ENCODE measurements at regions of chr4 and their contacts with region 1.

Region 1: DNA sequence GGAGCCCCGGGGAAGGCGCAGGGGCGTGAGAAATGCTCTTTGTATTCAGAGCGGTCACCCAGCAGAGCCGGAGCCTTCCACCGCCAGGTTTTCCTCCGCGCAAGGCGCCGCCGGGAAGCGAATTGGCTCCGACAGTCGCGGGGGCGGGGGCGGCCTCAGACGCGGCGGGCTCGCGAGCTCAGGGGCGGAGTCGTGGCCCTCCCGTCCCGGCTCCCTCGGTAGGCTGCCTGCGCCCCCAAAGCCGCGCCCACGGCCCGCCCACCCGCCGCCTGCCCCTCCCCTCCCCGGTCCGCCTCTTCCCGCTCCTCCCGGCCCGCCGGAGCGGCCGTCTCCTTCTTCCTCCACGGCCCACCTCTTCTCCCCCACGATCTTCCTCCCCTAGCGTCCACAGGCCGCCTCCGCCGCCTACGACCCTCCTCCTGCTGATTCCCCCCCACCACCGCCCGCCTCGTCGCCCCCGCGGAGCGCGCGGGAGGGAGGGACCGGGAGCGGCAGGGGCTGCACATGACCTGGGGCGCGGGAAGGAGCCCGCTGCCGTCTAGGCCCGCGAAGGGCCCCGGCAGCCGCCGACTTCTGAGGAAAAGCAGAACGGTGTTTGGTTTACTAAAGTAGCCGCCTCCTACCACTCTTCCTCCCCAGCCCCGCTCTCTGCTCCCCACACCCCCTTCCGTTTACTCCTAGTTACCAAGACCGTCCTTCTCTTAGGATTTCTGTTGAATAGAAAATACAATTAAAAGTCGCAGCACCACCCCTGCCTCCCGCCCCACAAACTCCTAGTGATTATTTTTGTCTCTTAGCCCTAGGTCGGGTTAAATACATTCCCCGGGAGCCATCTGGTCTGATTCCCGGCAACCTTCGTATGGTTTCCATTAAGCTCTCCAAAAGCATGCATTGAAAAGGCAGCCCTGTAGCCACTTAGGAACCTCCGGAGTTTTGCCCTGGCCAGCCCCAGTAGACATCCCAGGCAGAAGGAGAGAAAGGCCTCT is 53.2 kb downstream of the C4orf51 start:
- DNase-seq: peak; percentile 96

Region 2: DNA sequence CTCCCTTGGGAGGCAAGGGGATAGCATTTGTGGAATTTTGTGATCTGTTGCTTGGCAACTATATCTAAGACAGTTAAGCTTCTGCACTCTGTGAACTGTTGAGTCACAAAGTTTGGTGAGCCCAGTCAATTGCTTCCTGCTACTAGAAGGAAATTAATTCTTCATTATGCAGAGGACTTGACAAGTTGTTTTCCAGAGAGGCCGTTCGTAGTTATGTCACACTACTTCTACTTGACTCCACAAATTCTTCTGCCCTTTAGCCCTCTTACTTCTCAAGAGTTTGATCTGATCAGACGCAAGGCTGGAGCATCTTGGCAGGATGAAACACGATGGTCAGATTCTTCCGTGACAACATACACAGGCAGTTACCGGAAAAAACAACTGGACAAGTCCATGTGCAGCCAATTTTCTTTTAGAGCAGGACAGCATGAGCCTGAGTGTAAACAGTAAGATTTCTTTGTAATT is 53.2 kb before region 1 on chr4 and contains the start of gene C4orf51:
- intact Hi-C with region 1: loop called (anchors 5 kb)
- DNase-seq: no peak
- total RNA-seq, gene C4orf51: not detected

Region 3: GRCh38 chr4:145760961-145761929 is 28.1 kb after region 1 on chr4:
- intact Hi-C with region 1: loop called (anchors 2 kb)
- DNase-seq: peak; percentile 86

Region 4: GRCh38 chr4:145808021-145808650 is 74.9 kb after region 1 on chr4:
- intact Hi-C with region 1: loop called (anchors 2 kb)
- DNase-seq: no peak

Region 5: GRCh38 chr4:145887241-145887991 is 154.2 kb after region 1 on chr4:
- intact Hi-C with region 1: loop called (anchors 5 kb)
- DNase-seq: no peak

Region 6: GRCh38 chr4:145936142-145936996 is 203.2 kb after region 1 on chr4:
- intact Hi-C with region 1: loop called (anchors 2 kb)
- DNase-seq: peak; percentile 82

Measured in cardiac septum (tissue), 1 donor.